Activated CD4-positive, alpha-beta memory T cell treated with anti-CD3 and anti-CD28 coated beads for 36 hours (primary cell): ENCODE measurements at regions of chr10 and their contacts with region 1.

Region 1: GRCh38 chr10:48363617-48364355 is 57.3 kb downstream of the MAPK8 start:
- DNase-seq: peak; percentile 25
- H3K4me3 Mint-ChIP-seq: no peak overlapping the region
- H3K27ac Mint-ChIP-seq: no peak overlapping the region
- H3K4me1 Mint-ChIP-seq: peaks cover 12% of the 10 kb centered on the region
- H3K27me3 Mint-ChIP-seq: no peaks in the 10 kb centered on the region

Region 2: GRCh38 chr10:48506147-48506917 is 142.5 kb after region 1 on chr10:
- CTCF ChIA-PET with region 1: interaction called, 7 read pairs
- POLR2A ChIA-PET with region 1: no interaction called
- intact Hi-C with region 1: loop called (anchors 1 kb)
- DNase-seq: peak; percentile 21
- H3K4me3 Mint-ChIP-seq: no peak overlapping the region
- H3K27ac Mint-ChIP-seq: no peak overlapping the region
- H3K4me1 Mint-ChIP-seq: no peaks in the 10 kb centered on the region
- H3K27me3 Mint-ChIP-seq: peaks cover 1% of the 10 kb centered on the region

Region 3: DNA sequence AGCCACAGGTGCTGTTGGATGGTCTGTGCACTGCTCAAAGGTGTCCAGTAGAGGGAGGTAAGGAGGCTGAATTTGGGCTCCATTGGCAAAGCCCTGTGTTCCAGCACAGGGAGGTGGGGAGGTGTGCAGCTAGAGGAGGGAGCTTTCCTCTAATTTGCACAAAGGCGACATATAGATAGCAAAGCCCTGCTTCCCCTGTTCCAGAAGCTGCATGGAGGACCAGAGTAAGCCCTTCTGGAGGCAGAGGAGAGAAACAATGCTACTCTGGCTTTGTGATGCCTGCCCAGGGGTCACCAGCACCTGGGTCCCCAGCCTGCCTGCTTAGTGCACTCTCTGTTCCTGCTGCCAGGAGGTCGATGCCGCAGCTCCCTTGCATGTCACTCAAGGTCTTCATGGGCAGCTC is 244.5 kb after region 1 on chr10:
- CTCF ChIA-PET with region 1: interaction called, 12 read pairs
- POLR2A ChIA-PET with region 1: no interaction called
- intact Hi-C with region 1: no loop called
- DNase-seq: peak; percentile 43
- H3K4me3 Mint-ChIP-seq: no peak overlapping the region
- H3K27ac Mint-ChIP-seq: no peak overlapping the region
- H3K4me1 Mint-ChIP-seq: peaks cover 3% of the 10 kb centered on the region
- H3K27me3 Mint-ChIP-seq: peaks cover 50% of the 10 kb centered on the region